ENCODE measurements at regions of chr11 and their contacts with region 1.

Region 1: GRCh38 chr11:66694732-66695207 is 17.1 kb upstream of the RBM4B start:
- DNase-seq: peak; percentile 95

Region 2: GRCh38 chr11:66835768-66836405 is 141.1 kb after region 1 on chr11:
- intact Hi-C with region 1: loop called (anchors 2 to 5 kb)
- DNase-seq: no peak

Region 3: DNA sequence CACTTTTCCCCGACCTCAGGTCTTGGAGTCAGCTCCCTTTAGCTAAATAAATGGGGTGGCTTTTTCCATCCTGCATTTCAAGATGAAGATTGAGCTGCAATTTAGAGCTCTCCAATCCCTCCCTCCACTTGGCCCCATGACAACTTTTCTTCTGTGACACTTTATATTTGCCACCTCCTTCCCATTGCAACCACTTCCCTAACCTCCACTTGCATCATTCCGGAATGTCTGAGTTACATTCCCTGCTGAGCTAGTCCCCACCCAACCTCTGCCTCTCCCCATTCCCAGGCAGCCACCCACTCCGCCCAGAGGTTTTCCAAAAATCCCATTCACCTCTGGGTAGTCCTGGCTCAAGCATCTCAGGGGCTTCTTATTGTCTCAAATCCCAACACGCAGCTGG is 238.7 kb after region 1 on chr11:
- intact Hi-C with region 1: no loop called
- DNase-seq: no peak